Lower leg skin (tissue), 4 donors: ENCODE measurements at regions of chr5 and their contacts with region 1.

Region 1: DNA sequence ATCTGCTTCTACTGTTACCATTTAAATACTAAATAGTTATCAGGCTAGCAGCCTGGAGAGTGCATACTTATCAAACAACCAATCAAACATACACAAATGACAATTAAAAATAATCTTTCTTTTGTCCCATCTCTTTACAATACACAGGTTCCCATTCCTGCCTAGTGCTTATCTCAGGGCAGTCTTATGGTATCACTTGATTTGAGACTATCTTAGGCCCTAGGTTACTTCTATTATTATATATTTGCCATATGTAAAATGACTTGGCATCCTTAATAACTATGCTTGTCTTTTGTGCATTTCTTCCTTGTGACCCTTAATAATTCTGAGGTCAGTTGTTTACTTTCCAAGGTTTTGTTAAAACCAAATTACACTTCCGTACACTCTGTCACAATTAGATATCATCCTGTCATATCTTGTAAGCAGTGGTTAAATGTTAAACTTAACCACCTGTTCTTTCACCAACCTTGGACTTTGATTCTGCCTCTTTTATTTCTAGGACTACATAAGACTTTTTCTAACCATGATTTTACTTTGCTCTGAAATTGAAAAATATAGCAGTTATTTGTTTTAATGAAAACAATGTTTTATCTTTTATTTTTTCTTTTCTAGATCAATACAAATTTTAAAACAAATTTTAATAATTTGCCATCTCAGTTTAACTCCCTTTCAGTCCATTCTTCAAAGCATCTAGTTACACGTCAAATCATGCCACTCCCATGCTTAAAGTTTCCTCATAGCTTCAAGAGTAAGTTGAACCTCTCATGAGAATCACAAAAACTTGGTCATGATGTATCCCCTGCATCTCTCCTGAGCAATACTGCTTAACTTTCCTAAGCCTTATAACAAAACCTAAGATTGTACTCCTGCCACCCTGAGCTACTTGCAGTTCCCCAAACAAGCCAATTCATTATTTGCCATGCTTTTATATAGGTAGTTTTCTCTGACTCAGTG is 281.3 kb downstream of the HCN1 start:
- DNase-seq: no peak
- H3K4me3 ChIP-seq: no peak overlapping the region
- CTCF ChIP-seq: no peak
- POLR2A ChIP-seq: no peak

Region 2: DNA sequence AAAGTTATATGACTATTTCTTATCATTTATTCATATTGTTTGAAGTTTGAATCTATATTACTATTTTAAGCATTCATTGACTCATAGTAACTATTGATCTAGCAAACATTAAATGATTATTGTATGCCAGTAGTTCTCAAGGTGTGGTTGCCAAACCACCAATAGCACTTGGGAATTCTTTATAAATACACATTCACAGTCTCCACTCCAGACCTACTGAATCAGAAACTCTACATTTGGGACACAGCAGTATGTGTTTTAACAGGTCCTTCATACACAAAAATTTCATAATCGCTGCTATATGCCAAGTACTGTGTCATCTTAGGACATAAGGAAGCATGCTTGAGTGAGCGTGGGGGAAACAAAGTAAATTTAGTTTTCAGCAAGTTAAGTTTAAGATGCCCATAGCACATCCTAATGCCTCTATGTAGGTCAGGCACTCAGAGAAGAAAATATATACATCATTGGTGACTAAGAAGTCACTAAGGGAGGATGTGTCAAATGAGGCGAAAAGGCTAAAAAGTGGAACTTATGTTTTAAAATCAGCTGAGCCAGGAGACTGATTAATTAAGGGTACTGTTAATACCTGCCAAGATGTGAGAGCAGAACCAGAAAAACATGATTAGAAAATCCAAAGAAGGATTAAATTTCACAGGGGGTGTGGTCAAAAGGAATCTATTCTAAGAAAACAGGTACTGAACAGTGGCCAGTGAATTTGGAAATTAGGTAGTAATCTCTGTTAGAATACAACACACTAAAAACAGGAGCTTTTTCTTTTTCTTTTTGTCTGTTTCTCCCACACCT is 59.5 kb before region 1 on chr5:
- intact Hi-C with region 1: no loop called
- DNase-seq: no peak
- H3K4me3 ChIP-seq: no peak overlapping the region
- CTCF ChIP-seq: no peak
- POLR2A ChIP-seq: no peak

Region 3: DNA sequence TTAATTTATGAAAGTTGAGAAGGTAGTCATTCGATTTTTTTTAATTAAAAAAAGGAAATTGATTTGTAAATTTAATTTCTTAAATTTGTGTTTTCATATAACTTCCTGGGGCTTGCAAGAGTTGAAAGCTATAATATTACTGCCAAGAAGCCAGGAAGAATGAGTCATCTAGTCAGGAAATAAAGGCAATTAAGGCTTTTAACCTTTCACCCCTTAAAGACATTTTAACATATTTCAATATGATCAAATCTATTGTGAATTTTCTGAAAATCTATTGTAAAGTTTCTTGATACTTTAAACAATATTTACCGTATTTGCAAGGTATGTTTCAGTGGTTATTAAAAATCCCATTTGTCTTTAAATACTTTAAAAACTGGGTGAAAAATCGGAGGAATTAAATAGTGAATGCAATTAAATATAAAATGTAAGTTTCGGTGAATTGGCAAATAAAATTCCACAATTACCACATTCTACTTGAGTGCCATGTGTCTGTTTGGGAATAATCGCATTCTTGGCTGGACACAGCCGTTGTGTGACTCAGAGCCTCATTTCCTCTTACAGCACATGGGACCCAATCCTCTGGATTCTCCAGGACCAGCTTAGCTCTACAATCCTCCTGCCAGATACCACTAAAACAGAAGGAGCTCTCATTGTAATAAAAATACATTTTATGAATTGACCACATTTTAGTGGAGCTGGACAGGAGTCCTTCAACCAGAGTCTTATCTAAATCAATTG is 29.4 kb before region 1 on chr5:
- intact Hi-C with region 1: loop called (anchors 2 kb)
- DNase-seq: no peak
- H3K4me3 ChIP-seq: no peak overlapping the region
- CTCF ChIP-seq: no peak
- POLR2A ChIP-seq: no peak